ENCODE measurements at regions of chr5 and their contacts with region 1.

Region 1: GRCh38 chr5:61319388-61320146 is 12.5 kb upstream of the ZSWIM6 start:
- DNase-seq: no peak
- H3K4me3 ChIP-seq: no peak overlapping the region
- H3K27ac ChIP-seq: peak overlapping the region in 1 of 2 donors; percentile 16
- H3K4me1 ChIP-seq: no peaks in the 10 kb centered on the region
- H3K27me3 ChIP-seq: no peaks in the 10 kb centered on the region
- CTCF ChIP-seq: no peak
- POLR2A ChIP-seq: no peak

Region 2: GRCh38 chr5:60944904-60945812 is 374.4 kb before region 1 on chr5 and contains the starts of genes ERCC8 and NDUFAF2:
- intact Hi-C with region 1: loop called (anchors 10 kb)
- DNase-seq: peak; percentile 90
- H3K4me3 ChIP-seq: peak within 1 kb of the TSS; percentile 51 to 72
- H3K27ac ChIP-seq: peak within 1 kb of the TSS; percentile 80 to 84
- H3K4me1 ChIP-seq: no peaks in the 10 kb centered on the region
- H3K27me3 ChIP-seq: no peaks in the 10 kb centered on the region
- CTCF ChIP-seq: no peak
- POLR2A ChIP-seq: peak; percentile 53 to 54
- total RNA-seq, gene ERCC8: 1.0 to 39.8 (median 6.8) TPM
- total RNA-seq, gene NDUFAF2: 14.1 to 78.9 (median 31.0) TPM

Measured in uterus (tissue), 4 donors.